WTC11 (cell line): ENCODE measurements at regions of chr1 and their contacts with region 1.

Region 1: GRCh38 chr1:6267686-6268322 is 6.9 kb upstream of the GPR153 start:
- DNase-seq: no peak
- ATAC-seq: no peak
- H3K4me3 Mint-ChIP-seq: no peak overlapping the region
- H3K27ac Mint-ChIP-seq: peak overlapping the region; percentile 26; the same call in 1 of the 2 replicates
- H3K4me1 Mint-ChIP-seq: peaks cover 2% of the 10 kb centered on the region
- H3K27me3 Mint-ChIP-seq: no peaks in the 10 kb centered on the region
- CTCF ChIP-seq: no peak

Region 2: DNA sequence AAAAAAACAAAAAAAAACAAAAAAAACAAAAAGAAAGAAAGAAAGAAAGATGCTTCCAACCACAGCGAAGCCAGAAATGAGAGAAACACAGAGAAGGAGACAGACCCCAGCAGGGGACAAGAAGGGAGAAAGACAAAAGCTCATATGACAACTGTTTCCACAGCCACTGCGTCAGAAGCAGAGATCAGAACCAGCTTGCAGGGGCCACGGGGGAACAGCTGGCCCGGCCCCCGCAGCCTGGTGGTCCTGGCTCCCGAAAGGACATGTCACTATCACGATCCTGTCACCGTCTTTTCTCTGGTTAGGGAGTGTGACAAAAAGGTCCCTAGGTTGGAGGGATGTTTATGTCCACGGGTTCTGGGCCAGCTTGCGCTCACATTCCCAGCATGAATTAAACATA is 65.0 kb after region 1 on chr1:
- CTCF ChIA-PET with region 1: interaction called, 13 read pairs
- POLR2A ChIA-PET with region 1: no interaction called
- DNase-seq: no peak
- ATAC-seq: no peak
- H3K4me3 Mint-ChIP-seq: no peak overlapping the region
- H3K27ac Mint-ChIP-seq: 0 out of 2 replicates have a peak overlapping the region, but pooled peaks have one; percentile 60
- H3K4me1 Mint-ChIP-seq: peaks cover 16% of the 10 kb centered on the region
- H3K27me3 Mint-ChIP-seq: no peaks in the 10 kb centered on the region
- CTCF ChIP-seq: no peak

Region 3: DNA sequence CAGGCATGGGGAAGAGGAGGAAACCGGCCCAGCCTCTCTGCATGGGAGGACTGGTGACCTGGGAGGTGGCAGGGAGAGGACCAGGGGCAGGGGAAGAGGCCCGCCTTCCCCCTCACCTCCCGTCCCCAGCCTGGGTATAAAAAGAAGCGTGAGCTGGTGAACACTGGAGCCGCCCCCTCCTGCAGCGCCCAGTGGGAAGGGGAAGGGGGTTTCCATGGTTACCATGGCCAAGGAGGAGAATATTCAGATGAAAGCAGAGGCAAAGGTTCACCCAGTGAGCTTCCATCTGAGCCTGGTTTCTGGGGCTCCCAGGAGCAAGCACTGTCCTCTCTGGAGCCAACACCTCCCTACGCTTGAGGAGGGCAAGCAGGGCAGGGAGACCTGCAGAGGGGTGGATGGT is 70.9 kb after region 1 on chr1:
- CTCF ChIA-PET with region 1: interaction called, 14 read pairs
- POLR2A ChIA-PET with region 1: no interaction called
- DNase-seq: no peak
- ATAC-seq: no peak; the same call in 1 of the 2 replicates
- H3K4me3 Mint-ChIP-seq: no peak overlapping the region
- H3K27ac Mint-ChIP-seq: peak overlapping the region; percentile 32; the same call in 1 of the 2 replicates
- H3K4me1 Mint-ChIP-seq: peaks cover 28% of the 10 kb centered on the region
- H3K27me3 Mint-ChIP-seq: no peaks in the 10 kb centered on the region
- CTCF ChIP-seq: no peak